ENCODE measurements at regions of chr7 and their contacts with region 1.

Region 1: DNA sequence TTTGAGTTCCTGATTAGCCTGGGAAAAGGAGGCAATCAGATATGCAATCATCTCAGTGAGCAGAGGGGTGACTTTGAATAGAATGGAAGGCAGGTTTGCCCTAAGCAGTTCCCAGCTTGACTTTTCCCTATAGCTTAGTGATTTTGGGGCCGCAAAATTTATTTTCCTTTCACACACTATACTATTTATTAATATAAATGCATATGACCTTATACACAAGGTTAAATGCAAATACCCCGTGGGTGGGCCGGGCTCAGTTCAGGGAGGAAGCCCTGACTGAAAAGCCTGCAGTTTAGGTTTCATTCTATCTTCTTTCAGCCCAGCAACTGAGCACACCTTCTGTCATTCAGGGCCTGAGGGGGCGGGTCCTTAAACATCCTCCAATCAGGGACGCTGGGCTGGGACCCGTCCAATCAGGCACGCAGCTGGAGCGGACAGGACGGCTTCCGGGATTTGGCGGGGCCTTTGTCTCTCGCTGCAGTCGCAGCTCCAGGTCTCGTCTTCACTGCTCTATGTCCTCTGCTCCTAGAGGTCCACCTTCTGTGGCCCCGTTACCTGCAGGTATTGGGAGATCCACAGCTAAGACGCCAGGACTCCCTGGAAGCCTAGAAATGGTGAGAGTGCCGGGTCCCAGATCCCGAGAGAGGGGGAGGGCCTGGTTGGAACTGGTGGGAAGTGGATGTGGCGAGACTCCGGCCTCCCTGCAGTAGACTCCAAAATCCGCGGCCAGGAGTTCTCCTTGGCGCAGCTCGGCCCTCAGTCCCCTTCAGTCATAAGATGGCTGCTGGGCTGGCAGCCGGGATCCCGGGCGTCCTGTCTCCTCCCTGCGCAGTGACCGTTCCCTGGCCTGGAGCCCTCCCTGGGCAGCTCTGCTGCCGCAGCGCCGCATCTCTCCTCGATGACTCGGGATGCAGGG is at the start of gene ZNF273:
- DNase-seq: peak; percentile 96
- ATAC-seq: peak; percentile 100
- H3K4me3 Mint-ChIP-seq: peak within 1 kb of the TSS; percentile 98
- H3K27ac Mint-ChIP-seq: peak within 1 kb of the TSS; percentile 95
- H3K4me1 Mint-ChIP-seq: peaks cover 44% of the 10 kb centered on the region
- H3K27me3 Mint-ChIP-seq: no peaks in the 10 kb centered on the region
- total RNA-seq, gene ZNF273: 12.5 to 13.3 TPM

Region 2: GRCh38 chr7:64686493-64687184 is 216.4 kb before region 1 on chr7:
- CTCF ChIA-PET with region 1: no interaction called
- POLR2A ChIA-PET with region 1: no interaction called
- intact Hi-C with region 1: no loop called
- DNase-seq: peak; percentile 54
- ATAC-seq: peak; percentile 67
- H3K4me3 Mint-ChIP-seq: no peak overlapping the region
- H3K27ac Mint-ChIP-seq: peak overlapping the region; percentile 49
- H3K4me1 Mint-ChIP-seq: peaks cover 35% of the 10 kb centered on the region
- H3K27me3 Mint-ChIP-seq: no peaks in the 10 kb centered on the region

Region 3: GRCh38 chr7:64794171-64794844 is 108.8 kb before region 1 on chr7 and contains the start of gene ZNF138:
- CTCF ChIA-PET with region 1: no interaction called
- POLR2A ChIA-PET with region 1: no interaction called
- intact Hi-C with region 1: loop called in 1 of 2 experiments (anchors 1 kb)
- DNase-seq: peak; percentile 97
- ATAC-seq: peak; percentile 100
- H3K4me3 Mint-ChIP-seq: peak within 1 kb of the TSS; percentile 97
- H3K27ac Mint-ChIP-seq: peak within 1 kb of the TSS; percentile 99
- H3K4me1 Mint-ChIP-seq: peaks cover 23% of the 10 kb centered on the region
- H3K27me3 Mint-ChIP-seq: no peaks in the 10 kb centered on the region
- total RNA-seq, gene ZNF138: 12.0 to 19.6 TPM

Region 4: DNA sequence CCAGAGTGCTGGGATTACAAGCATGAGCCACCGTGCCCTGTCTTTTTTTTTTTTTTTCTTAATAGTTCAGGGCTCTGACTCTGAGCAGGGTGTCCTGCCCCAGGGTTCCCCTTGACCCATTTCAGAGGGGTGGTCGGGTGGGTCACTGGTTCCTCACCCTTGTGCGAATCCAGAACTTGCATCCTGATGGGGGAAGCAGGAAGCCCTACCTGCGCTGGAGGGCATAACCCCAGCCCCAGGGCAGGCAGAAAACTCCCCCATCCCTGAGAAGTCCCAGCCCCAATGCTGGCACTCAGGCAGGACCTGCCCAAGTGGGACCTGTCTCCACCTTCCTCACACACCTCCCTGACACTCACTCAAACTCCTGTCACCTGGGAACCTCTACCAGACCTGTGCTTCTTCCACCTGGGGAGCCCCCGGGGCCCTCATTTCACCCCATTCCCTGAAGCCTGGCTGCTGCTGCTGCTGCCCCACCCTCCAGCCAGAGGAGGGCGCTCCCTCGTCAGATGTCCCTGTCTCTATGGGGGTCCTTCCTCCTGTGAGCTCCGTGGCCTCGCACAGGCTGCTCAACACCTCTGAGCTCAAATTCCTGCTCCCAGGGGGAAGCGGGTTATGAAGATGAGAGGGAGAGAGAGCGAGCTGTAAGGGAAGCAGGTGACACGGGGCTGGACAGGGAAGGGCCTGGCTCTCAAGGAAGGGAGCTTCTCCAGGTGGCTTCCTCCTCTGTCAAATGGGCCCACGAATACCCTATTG is 15.1 kb before region 1 on chr7:
- CTCF ChIA-PET with region 1: interaction called, 4 read pairs
- POLR2A ChIA-PET with region 1: no interaction called
- intact Hi-C with region 1: loop called in 1 of 2 experiments (anchors 2 kb)
- DNase-seq: peak; percentile 69
- ATAC-seq: peak; percentile 62
- H3K4me3 Mint-ChIP-seq: peak overlapping the region; percentile 74
- H3K27ac Mint-ChIP-seq: no peak overlapping the region
- H3K4me1 Mint-ChIP-seq: peaks cover 14% of the 10 kb centered on the region
- H3K27me3 Mint-ChIP-seq: peaks cover 52% of the 10 kb centered on the region

Region 5: DNA sequence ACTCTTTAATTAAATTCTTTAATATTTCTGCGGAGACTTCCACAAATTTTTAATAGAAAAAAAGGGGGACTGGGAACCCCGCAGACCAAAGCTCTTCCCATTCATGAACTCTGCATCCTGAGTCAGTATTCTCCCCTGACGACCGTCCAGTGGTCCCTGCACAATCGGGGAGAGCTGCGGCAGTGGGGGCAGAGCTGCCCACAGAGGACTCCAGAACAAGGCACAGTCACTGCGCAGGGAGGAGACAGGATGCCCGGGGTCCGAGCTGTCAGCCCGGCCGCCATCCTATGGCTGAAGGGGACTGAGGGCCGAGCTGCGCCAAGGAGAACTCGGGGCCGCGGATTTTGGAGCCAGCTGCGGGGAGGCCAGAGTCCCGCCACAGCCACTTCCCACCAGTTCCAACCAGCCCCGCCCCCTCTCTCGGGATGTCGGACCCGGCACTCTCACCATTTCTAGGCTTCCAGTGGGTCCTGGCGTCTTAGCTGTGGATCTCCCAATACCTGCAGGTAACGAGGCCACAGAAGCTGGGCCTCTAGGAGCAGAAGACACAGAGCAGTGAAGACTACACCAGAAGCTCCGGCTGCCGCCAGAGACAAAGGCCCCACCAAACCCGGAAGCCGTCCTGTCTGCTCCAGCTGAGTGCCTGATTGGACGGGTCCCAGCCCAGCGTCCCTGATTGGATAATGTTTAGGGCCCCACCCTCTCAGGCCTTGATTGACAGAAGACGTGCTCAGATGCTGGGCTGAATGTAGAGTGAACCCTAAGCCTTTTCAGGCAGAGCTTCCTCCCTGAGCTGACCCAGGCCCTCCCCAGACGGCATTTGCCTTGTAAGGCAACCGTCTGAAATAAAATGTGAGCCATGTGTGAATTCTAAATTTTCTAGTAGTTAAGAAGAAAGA is 103.3 kb after region 1 on chr7 and contains the start of gene ERV3-1:
- CTCF ChIA-PET with region 1: no interaction called
- POLR2A ChIA-PET with region 1: interaction called, 3 read pairs
- intact Hi-C with region 1: loop called in 1 of 2 experiments (anchors 1 kb)
- DNase-seq: peak; percentile 95
- ATAC-seq: peak; percentile 100
- H3K4me3 Mint-ChIP-seq: peak within 1 kb of the TSS; percentile 94
- H3K27ac Mint-ChIP-seq: peak within 1 kb of the TSS; percentile 92
- H3K4me1 Mint-ChIP-seq: peaks cover 27% of the 10 kb centered on the region
- H3K27me3 Mint-ChIP-seq: no peaks in the 10 kb centered on the region
- total RNA-seq, gene ERV3-1: 6.3 to 8.9 TPM

Region 6: DNA sequence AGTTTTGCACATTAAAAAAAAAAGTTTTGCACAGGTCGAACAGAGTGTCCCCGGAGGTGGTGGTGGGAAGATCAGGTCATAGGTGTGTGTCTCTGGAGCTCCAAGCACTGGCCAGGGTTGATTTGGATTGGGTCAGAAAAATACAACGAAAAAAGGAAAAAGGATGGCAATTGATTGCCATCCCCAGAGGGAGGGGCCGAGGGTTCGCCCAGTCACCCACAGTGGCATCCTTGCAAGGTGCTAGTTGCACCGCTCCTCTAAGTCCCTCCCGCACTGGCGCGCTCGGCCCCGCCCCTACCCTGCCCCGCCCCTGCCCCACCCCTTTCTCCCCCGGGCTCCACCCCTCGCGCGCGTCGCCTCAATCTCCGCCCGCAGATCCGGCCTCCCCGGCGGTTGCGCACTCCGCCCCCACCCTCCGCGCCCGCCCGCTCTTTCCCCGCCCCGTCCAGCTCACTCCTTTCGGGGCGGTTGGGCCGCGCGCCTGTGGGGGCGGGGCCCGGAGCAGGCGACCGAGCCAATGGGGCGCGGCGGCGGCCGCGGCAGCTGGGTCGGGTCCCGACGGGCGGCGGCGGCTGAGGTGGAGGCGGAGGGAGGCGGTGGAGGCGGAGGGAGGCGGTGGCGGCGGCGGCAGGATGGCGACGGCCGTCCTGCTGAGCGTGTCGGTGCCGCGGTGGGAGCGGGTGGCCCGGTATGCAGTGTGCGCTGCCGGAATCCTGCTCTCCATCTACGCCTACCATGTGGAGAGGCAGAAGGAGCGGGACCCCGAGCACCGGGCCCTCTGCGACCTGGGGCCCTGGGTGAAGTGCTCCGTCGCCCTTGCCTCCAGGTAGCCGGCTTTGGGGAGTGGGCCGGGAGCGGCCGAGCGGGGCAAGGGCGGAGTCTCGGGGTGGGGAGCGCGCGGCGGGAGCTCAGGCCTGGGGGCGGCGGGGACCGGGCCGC is 134.9 kb after region 1 on chr7:
- CTCF ChIA-PET with region 1: no interaction called
- POLR2A ChIA-PET with region 1: no interaction called
- intact Hi-C with region 1: loop called in 1 of 2 experiments (anchors 1 kb)
- DNase-seq: peak; percentile 97
- ATAC-seq: peak; percentile 93
- H3K4me3 Mint-ChIP-seq: peak overlapping the region; percentile 82
- H3K27ac Mint-ChIP-seq: no peak overlapping the region
- H3K4me1 Mint-ChIP-seq: peaks cover 13% of the 10 kb centered on the region
- H3K27me3 Mint-ChIP-seq: no peaks in the 10 kb centered on the region

Measured in activated CD4-positive, alpha-beta T cell treated with anti-CD3 and anti-CD28 coated beads for 36 hours (primary cell).